ENCODE measurements at regions of chr9 and their contacts with region 1.

Region 1: GRCh38 chr9:91433180-91433579 is 9.5 kb upstream of the NFIL3 start:
- DNase-seq: no peak
- H3K4me3 ChIP-seq: no peak overlapping the region
- H3K27ac ChIP-seq: no peak overlapping the region
- H3K4me1 ChIP-seq: no peaks in the 10 kb centered on the region
- H3K27me3 ChIP-seq: no peaks in the 10 kb centered on the region
- CTCF ChIP-seq: no peak
- EP300 ChIP-seq: no peak
- POLR2A ChIP-seq: no peak
- RAD21 ChIP-seq: peak; percentile 8 to 12; a peak in 2 of 4 replicates

Region 2: GRCh38 chr9:91334053-91334452 is 99.1 kb before region 1 on chr9:
- CTCF ChIA-PET with region 1: no interaction called
- POLR2A ChIA-PET with region 1: no interaction called
- DNase-seq: no peak
- H3K4me3 ChIP-seq: no peak overlapping the region
- H3K27ac ChIP-seq: no peak overlapping the region
- H3K4me1 ChIP-seq: no peaks in the 10 kb centered on the region
- H3K27me3 ChIP-seq: no peaks in the 10 kb centered on the region
- CTCF ChIP-seq: no peak
- EP300 ChIP-seq: no peak
- POLR2A ChIP-seq: no peak
- RAD21 ChIP-seq: no peak

Region 3: DNA sequence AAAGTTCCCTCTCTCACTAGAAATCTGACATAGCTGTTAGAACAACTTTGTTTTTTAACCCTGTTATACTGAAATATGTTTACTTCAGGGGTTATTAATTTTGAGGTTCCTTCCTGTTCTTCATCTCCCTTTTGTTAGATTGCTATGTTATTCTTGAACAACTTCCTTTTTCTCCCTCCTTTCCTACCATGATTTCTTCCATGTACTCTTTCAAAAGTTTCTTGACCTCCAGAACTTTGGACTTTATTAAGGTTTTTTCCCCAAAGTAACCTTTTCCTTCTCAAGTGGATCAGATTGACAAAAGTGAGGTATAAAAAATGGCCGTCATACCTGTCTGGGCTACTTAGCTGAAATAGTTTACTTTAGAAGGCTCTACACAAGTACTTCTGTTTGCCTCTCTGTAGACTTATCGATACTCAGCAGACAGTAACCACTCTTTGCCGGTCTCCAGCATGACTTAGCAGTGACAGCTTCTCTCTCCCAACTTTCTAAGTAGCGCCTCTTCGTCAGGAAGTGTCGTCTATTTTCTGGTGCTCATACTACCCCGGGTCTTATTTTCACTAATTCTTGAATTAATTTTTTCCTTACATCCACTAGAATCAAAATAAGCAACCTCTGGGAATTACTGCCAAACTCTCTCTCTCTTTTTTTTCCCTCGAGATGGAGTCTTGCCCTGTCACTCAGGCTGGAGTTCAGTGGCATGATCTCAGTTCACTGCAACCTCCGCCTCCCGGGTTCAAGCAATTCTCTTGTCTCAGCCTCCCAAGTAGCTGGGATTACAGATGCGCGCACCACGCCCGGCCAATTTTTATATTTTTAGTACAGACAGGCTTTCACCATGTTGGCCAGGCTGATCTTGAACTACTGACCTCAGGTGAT is 29.3 kb before region 1 on chr9:
- CTCF ChIA-PET with region 1: no interaction called
- POLR2A ChIA-PET with region 1: no interaction called
- DNase-seq: no peak
- H3K4me3 ChIP-seq: no peak overlapping the region
- H3K27ac ChIP-seq: no peak overlapping the region
- H3K4me1 ChIP-seq: no peaks in the 10 kb centered on the region
- H3K27me3 ChIP-seq: no peaks in the 10 kb centered on the region
- CTCF ChIP-seq: no peak
- EP300 ChIP-seq: no peak
- POLR2A ChIP-seq: no peak
- RAD21 ChIP-seq: no peak

Region 4: DNA sequence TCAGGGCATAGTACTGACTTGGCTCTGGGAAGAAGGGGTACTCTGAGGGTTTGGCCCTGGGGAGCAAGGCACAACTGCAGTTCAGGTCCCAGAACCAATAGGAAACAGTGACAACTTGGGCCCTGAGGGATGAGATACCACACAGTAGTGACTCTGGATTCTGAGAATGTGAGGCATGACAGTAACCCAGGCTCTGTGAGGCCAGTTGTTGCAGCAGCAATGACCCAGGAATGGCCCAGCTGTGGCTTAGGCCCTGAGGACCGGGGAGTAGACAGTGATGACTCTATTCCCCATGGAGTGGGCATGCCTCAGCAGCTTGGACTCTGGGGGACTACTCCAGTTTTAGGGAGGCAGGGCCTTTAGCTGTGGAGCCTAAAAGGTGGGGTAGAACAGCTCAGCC is 12.0 kb after region 1 on chr9:
- CTCF ChIA-PET with region 1: interaction called, 10 read pairs
- POLR2A ChIA-PET with region 1: no interaction called
- DNase-seq: no peak
- H3K4me3 ChIP-seq: no peak overlapping the region
- H3K27ac ChIP-seq: no peak overlapping the region
- H3K4me1 ChIP-seq: no peaks in the 10 kb centered on the region
- H3K27me3 ChIP-seq: no peaks in the 10 kb centered on the region
- CTCF ChIP-seq: no peak
- EP300 ChIP-seq: no peak
- POLR2A ChIP-seq: no peak
- RAD21 ChIP-seq: no peak

Region 5: GRCh38 chr9:91546574-91546973 is 113.4 kb after region 1 on chr9:
- CTCF ChIA-PET with region 1: no interaction called
- POLR2A ChIA-PET with region 1: no interaction called
- DNase-seq: no peak
- H3K4me3 ChIP-seq: no peak overlapping the region
- H3K27ac ChIP-seq: no peak overlapping the region
- H3K4me1 ChIP-seq: no peaks in the 10 kb centered on the region
- H3K27me3 ChIP-seq: no peaks in the 10 kb centered on the region
- CTCF ChIP-seq: no peak
- EP300 ChIP-seq: no peak
- POLR2A ChIP-seq: no peak
- RAD21 ChIP-seq: no peak

Region 6: GRCh38 chr9:91572044-91572443 is 138.9 kb after region 1 on chr9:
- CTCF ChIA-PET with region 1: no interaction called
- POLR2A ChIA-PET with region 1: no interaction called
- DNase-seq: no peak
- H3K4me3 ChIP-seq: no peak overlapping the region
- H3K27ac ChIP-seq: no peak overlapping the region
- H3K4me1 ChIP-seq: peaks cover 0 to 7% (median 5%) of the 10 kb centered on the region in 4 experiments; a peak in 4 of 7 replicates
- H3K27me3 ChIP-seq: no peaks in the 10 kb centered on the region
- CTCF ChIP-seq: no peak
- EP300 ChIP-seq: no peak
- POLR2A ChIP-seq: no peak
- RAD21 ChIP-seq: no peak

Measured in H1 (cell line).